ENCODE measurements at regions of chr16 and their contacts with region 1.

Region 1: GRCh38 chr16:19502395-19503131 is 19.3 kb downstream of the GDE1 start:
- DNase-seq: peak; percentile 37
- H3K4me3 Mint-ChIP-seq: no peak overlapping the region
- H3K27ac Mint-ChIP-seq: no peak overlapping the region
- H3K4me1 Mint-ChIP-seq: no peaks in the 10 kb centered on the region
- H3K27me3 Mint-ChIP-seq: no peaks in the 10 kb centered on the region

Region 2: DNA sequence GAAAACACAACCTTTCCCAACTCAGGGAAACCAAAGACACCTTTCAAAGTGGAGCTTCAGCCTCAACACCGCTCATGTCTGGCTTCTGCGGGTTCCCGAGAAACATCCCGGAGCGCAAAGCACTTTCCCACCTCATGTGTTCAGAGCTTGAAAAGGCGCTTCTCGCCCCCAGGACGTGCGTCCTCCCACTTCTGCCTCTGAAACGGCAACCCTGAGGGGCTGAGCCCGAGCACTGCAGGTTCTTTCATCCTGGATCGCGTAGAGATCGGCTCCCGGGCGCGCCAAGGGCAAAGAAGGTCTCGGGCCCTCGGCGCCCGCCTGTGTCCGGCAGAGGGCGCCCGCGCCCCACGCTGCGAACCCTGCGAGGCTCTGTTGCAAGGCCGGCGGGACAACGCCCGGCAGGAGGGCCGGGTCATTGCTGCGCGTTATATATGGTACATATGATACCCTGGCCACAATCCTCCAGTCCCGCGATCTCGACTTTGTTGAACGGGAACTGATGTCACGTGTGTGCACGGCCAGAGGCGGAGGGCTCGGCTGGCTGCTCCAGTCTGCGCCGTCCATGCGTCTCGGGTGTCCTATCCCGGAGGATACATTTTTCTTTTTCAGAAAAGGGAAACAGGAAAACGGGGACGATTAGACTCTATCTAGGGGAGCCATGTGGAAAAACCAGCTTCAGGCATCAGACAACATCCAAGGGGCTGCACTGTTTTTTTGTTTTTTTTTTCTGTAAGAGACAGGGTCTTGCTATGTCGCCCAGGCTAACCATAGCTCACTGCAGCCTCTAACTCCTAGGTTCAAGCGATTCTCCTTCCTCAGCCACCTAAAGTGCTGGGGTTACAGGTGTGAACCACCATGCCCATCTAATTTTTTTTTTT is 416.0 kb before region 1 on chr16:
- intact Hi-C with region 1: loop called (anchors 1 kb)
- DNase-seq: peak; percentile 75
- H3K4me3 Mint-ChIP-seq: peak overlapping the region; percentile 54
- H3K27ac Mint-ChIP-seq: no peak overlapping the region
- H3K4me1 Mint-ChIP-seq: no peaks in the 10 kb centered on the region
- H3K27me3 Mint-ChIP-seq: peaks cover 7% of the 10 kb centered on the region

Region 3: DNA sequence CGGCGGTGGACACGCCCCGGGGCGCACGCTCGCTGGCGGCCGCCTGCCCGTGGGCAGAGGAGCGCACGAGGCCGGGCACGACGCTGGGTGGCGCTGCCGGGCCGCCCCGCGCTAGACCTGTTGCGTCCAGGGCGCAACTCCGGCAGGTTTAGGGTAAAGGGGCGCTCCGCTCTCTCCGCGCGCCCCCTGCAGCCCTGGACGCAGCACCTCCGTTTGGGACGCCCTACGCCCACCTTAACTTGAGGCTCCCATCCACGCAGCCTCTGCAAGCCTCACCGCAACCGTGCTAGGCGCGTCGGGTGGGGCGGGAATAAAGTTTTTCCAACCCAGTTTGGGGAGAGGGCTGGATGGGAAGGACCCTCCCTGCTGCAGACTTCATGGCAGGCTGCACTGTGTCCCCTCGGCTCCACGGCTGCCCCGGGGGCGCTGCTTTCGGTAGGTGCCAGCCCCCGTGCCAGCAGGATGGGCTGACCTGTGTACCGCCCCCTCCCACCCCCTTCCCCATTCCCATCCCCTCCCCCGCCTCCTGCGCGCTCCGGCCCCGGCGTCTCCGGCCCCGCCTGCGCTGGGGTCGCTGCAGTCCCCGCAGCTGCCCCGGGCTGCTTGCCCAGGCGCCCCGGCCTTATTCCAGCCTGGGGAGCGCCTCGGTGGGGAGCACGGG is 334.7 kb before region 1 on chr16 and contains the start of gene SYT17:
- intact Hi-C with region 1: loop called (anchors 1 kb)
- DNase-seq: peak; percentile 14
- H3K4me3 Mint-ChIP-seq: no peak within 1 kb of the TSS
- H3K27ac Mint-ChIP-seq: no peak within 1 kb of the TSS
- H3K4me1 Mint-ChIP-seq: no peaks in the 10 kb centered on the region
- H3K27me3 Mint-ChIP-seq: peaks cover 39% of the 10 kb centered on the region
- total RNA-seq, gene SYT17: 0.37 and 0.54 TPM in 2 replicates

Region 4: DNA sequence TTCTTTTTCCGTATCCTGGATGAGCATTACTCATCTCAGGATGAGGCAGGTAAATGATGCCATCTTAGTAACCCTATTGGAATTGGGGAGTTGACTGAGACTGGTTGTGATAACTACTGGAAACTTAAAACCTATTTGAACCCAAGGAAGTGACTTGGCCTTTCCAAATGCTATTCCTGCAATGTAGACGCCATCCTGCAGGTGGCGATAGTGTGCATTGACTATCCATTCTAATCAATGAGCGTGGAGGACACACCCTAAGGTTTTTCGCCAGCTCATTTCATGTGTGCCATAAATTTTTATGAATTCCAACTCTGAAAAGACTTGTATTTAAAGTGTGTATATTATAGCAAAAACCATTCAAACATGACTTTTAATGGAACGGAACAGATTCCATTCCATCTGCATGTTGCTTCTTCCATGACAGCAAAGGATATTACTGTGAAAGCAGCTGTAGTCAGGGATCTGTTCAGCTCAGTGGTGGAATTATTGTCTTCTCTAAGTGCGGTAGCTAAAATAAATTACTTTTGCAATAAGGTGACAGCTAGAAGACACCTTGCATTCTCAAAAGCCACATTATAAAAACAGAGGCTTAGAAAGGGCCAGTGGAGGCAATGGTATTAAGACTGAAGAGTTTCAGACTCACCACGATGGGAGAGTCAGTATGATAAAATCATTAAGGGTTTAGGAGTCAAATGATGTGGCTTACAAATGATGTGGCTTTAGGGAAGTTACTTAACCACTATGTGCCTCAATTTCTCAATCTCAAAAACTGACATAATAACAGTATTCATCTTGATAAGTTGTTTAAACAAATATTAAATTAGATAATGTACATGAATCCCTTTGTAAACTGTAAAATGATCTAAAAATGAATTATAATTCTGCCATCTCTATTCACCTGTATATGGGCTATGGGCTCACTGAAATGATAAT is 279.1 kb before region 1 on chr16:
- intact Hi-C with region 1: loop called (anchors 1 kb)
- DNase-seq: no peak
- H3K4me3 Mint-ChIP-seq: no peak overlapping the region
- H3K27ac Mint-ChIP-seq: no peak overlapping the region
- H3K4me1 Mint-ChIP-seq: no peaks in the 10 kb centered on the region
- H3K27me3 Mint-ChIP-seq: no peaks in the 10 kb centered on the region

Region 5: DNA sequence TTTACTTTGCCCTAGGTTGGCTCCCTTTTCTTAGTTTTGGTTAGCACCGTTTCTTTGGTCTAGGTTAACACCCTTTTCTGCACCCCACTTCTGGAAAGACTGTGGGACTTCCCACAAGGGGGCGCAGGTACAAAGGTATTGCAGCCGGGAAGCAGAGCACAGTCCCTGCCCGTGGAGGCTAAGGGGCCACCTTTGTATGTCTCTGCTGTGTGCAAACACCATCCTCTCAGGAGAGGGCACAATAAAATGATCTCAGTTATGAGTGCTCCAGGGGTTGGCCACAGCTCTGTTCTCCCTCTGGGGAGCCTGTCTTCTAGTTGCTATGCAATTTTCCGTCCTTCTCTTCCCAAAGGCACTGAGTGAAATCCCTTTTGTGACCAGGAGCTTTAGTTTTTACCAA is 113.3 kb before region 1 on chr16:
- intact Hi-C with region 1: loop called (anchors 1 kb)
- DNase-seq: peak; percentile 17
- H3K4me3 Mint-ChIP-seq: no peak overlapping the region
- H3K27ac Mint-ChIP-seq: no peak overlapping the region
- H3K4me1 Mint-ChIP-seq: peaks cover 14% of the 10 kb centered on the region
- H3K27me3 Mint-ChIP-seq: peaks cover 29% of the 10 kb centered on the region